ENCODE measurements at regions of chr3 and their contacts with region 1.

Region 1: GRCh38 chr3:131285456-131285855 is 96.1 kb upstream of the NUDT16 start:
- DNase-seq: no peak
- ATAC-seq: no peak
- H3K4me3 ChIP-seq: no peak overlapping the region
- H3K27ac ChIP-seq: no peak overlapping the region
- H3K4me1 ChIP-seq: no peaks in the 10 kb centered on the region
- H3K27me3 ChIP-seq: no peaks in the 10 kb centered on the region
- CTCF ChIP-seq: no peak
- POLR2A ChIP-seq: no peak
- RAD21 ChIP-seq: no peak

Region 2: DNA sequence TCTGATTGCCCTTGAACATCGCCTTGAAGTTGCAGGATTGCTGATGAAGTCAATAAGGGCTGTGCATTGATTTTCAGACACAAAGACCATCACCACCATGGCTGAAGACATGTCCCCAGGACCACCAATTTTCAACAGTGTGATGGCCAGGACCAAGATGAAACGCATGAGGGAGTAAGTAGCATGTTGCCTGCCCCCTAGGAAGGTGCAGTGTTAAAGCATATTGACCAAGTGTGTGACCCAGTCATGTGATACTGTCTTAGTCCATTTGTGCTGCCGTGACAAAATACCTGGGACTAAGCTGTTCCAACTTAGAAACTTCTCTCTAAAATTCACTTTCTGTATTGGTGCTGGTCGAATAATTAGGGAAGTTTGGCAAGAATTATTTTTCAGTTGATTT is 12.1 kb before region 1 on chr3:
- CTCF ChIA-PET with region 1: no interaction called
- POLR2A ChIA-PET with region 1: interaction called, 11 read pairs
- dilution Hi-C with region 1: no loop called
- in situ Hi-C with region 1: no loop called
- intact Hi-C with region 1: no loop called
- DNase-seq: no peak
- ATAC-seq: no peak
- H3K4me3 ChIP-seq: no peak overlapping the region
- H3K27ac ChIP-seq: no peak overlapping the region
- H3K4me1 ChIP-seq: no peaks in the 10 kb centered on the region
- H3K27me3 ChIP-seq: no peaks in the 10 kb centered on the region
- CTCF ChIP-seq: no peak
- POLR2A ChIP-seq: no peak
- RAD21 ChIP-seq: no peak

Measured in IMR-90 (cell line).